Mammary epithelial cell (primary cell): ENCODE measurements at regions of chr2 and their contacts with region 1.

Region 1: DNA sequence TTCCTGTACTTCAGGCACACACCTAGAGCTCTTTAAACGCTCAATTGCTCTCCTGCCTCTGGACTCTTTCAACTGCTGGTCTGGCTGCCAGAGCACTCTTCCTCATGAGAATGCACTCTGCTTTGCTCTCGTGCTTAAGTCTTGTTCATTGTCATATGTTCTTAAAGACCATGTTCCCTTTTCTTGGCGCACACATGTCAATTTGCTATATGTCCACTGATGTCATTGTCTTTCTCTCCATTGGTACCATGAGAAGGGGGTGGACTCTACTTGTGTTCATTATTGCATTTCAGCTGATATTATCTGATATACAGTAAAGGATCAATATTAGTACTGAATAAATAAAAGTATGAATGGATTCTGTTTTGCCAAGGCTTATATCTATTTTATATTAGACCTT is 16.8 kb downstream of the SPHKAP start:
- DNase-seq: no peak
- H3K4me3 ChIP-seq: no peak overlapping the region
- H3K27ac ChIP-seq: no peak overlapping the region
- H3K4me1 ChIP-seq: no peaks in the 10 kb centered on the region
- H3K27me3 ChIP-seq: no peaks in the 10 kb centered on the region
- CTCF ChIP-seq: no peak

Region 2: GRCh38 chr2:228197504-228197903 is 32.8 kb after region 1 on chr2:
- CTCF ChIA-PET with region 1: no interaction called
- dilution Hi-C with region 1: no loop called
- in situ Hi-C with region 1: no loop called
- intact Hi-C with region 1: no loop called
- DNase-seq: no peak
- H3K4me3 ChIP-seq: no peak overlapping the region
- H3K27ac ChIP-seq: no peak overlapping the region
- H3K4me1 ChIP-seq: no peaks in the 10 kb centered on the region
- H3K27me3 ChIP-seq: no peaks in the 10 kb centered on the region
- CTCF ChIP-seq: no peak

Region 3: DNA sequence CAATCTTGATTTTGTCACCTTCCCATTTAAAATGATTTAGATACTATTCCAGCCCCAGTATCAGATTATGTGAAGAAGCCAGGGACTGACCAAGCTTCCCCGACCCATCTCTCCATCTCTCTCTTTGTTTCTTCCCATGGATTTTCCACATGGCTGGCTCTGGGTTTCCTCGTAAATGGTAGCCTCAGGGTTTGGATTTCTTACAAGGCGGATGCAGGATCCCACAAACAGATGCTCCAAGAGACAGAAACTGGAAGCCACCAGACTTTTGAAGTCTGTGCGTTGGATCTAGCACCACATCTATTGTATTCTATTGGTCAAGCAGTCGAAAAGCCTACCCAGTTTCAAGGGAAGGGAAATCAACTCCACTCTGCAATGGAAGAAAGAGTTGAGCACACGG is 62.7 kb after region 1 on chr2:
- CTCF ChIA-PET with region 1: no interaction called
- dilution Hi-C with region 1: loop called (anchors 5 kb)
- in situ Hi-C with region 1: no loop called
- intact Hi-C with region 1: no loop called
- DNase-seq: no peak
- H3K4me3 ChIP-seq: no peak overlapping the region
- H3K27ac ChIP-seq: no peak overlapping the region
- H3K4me1 ChIP-seq: no peaks in the 10 kb centered on the region
- H3K27me3 ChIP-seq: no peaks in the 10 kb centered on the region
- CTCF ChIP-seq: no peak

Region 4: GRCh38 chr2:228556717-228557116 is 392.0 kb after region 1 on chr2:
- CTCF ChIA-PET with region 1: no interaction called
- dilution Hi-C with region 1: no loop called
- in situ Hi-C with region 1: no loop called
- intact Hi-C with region 1: no loop called
- DNase-seq: peak; percentile 42
- H3K4me3 ChIP-seq: no peak overlapping the region
- H3K27ac ChIP-seq: no peak overlapping the region
- H3K4me1 ChIP-seq: peaks cover 3% of the 10 kb centered on the region
- H3K27me3 ChIP-seq: no peaks in the 10 kb centered on the region
- CTCF ChIP-seq: no peak